SK-N-SH (cell line): ENCODE measurements at regions of chr2 and their contacts with region 1.

Region 1: GRCh38 chr2:217713395-217714286 is 289.2 kb downstream of the TNS1 start:
- DNase-seq: peak; percentile 79
- H3K4me3 ChIP-seq: peak overlapping the region in 1 of 2 experiments; percentile 14; a peak in 1 of 4 replicates
- H3K27ac ChIP-seq: peak overlapping the region; percentile 22 to 46; a peak in 2 of 4 replicates
- H3K4me1 ChIP-seq: peaks cover 26 to 28% of the 10 kb centered on the region in 2 experiments; a peak in 3 of 4 replicates
- H3K27me3 ChIP-seq: no peaks in the 10 kb centered on the region
- CTCF ChIP-seq: peak; percentile 96
- EP300 ChIP-seq: peak in 1 of 2 experiments; percentile 32; a peak in 1 of 4 replicates
- RAD21 ChIP-seq: peak; percentile 98

Region 2: GRCh38 chr2:216692636-216693413 is 1020.8 kb before region 1 on chr2:
- CTCF ChIA-PET with region 1: interaction called, 58 read pairs
- POLR2A ChIA-PET with region 1: interaction called, 4 read pairs
- DNase-seq: peak; percentile 86
- H3K4me3 ChIP-seq: peak overlapping the region; percentile 66 to 74
- H3K27ac ChIP-seq: peak overlapping the region; percentile 41 to 58; a peak in 3 of 4 replicates
- H3K4me1 ChIP-seq: peaks cover 35 to 54% of the 10 kb centered on the region in 2 experiments
- H3K27me3 ChIP-seq: no peaks in the 10 kb centered on the region
- CTCF ChIP-seq: no peak
- EP300 ChIP-seq: no peak
- RAD21 ChIP-seq: no peak

Region 3: GRCh38 chr2:217510771-217511291 is 202.8 kb before region 1 on chr2:
- CTCF ChIA-PET with region 1: interaction called, 45 read pairs
- POLR2A ChIA-PET with region 1: no interaction called
- DNase-seq: peak; percentile 78
- H3K4me3 ChIP-seq: no peak overlapping the region; a peak in 1 of 4 replicates
- H3K27ac ChIP-seq: peak overlapping the region in 1 of 2 experiments; percentile 48; a peak in 1 of 4 replicates
- H3K4me1 ChIP-seq: peaks cover 8 to 11% of the 10 kb centered on the region in 2 experiments; a peak in 3 of 4 replicates
- H3K27me3 ChIP-seq: no peaks in the 10 kb centered on the region
- CTCF ChIP-seq: peak; percentile 77
- EP300 ChIP-seq: no peak
- RAD21 ChIP-seq: peak; percentile 99

Region 4: DNA sequence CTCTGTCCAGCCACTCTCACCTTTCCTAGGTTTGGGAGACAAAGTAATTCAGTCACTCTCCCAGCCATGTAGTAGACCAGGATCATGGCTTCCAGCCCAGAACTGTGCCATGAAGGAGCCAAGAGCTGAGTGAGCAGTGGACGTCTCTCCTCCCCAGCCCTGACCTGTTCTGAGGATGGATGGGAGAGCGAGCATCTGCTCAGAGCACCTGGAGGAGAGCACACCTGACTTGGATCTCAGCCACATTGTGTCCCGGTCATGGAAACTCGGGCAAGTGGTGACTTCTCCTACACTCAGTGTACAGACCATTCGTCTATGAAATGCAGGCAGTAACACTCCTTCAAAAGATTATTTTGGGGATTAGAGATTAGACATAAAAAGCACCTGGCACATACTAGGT is 10.5 kb before region 1 on chr2:
- CTCF ChIA-PET with region 1: interaction called, 40 read pairs
- POLR2A ChIA-PET with region 1: no interaction called
- DNase-seq: no peak
- H3K4me3 ChIP-seq: no peak overlapping the region
- H3K27ac ChIP-seq: no peak overlapping the region
- H3K4me1 ChIP-seq: peaks cover 3 to 8% of the 10 kb centered on the region in 2 experiments; a peak in 1 of 4 replicates
- H3K27me3 ChIP-seq: no peaks in the 10 kb centered on the region
- CTCF ChIP-seq: no peak
- EP300 ChIP-seq: no peak
- RAD21 ChIP-seq: no peak